Activated B cell treated with CpG ODN at 0.5 μM for 24 hours (primary cell): ENCODE measurements at regions of chr3 and their contacts with region 1.

Region 1: DNA sequence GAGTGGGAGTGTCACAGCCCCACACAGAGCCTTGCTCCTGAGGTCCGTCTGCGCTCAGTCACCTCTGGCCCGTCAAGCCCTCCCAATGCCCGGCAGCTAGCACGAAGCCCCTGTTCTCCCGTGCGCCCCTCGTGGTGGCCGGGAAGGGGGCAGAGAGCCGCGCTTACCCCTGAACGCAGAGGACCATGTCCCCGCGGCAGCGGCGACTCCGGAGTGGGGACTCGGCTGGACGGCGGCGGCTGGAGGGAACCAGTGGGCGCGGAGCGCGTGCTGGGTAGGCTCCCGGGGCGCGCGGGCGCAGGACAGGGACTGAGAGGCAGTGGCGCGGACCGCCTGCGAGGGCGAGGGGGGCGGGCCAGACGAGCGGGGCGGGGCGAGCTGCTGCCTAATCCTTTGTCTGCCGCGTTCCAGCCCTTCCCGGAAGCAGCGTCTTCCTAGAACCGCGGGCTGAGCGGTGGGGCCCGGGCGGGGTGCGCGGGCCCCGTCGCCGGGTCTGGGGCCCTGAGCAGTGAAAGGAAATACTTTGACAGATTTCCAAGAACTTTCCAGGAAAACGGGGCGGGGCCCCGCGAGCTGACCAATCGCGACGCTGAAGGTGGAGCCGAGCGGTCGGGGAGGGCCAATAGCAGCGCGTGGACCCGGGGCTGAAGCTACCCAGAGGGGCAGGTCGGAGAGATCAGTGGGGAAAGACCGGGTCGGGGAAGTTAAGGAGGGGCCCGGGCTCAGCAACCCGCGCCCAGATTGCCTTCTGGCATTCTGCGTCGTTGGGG is at the start of gene CISH:
- DNase-seq: peak; percentile 92
- ATAC-seq: peak; percentile 77
- H3K4me3 Mint-ChIP-seq: peak within 1 kb of the TSS; percentile 87
- H3K27ac Mint-ChIP-seq: peak within 1 kb of the TSS; percentile 77
- H3K4me1 Mint-ChIP-seq: peaks cover 38% of the 10 kb centered on the region
- H3K27me3 Mint-ChIP-seq: no peaks in the 10 kb centered on the region
- CTCF ChIP-seq: no peak
- total RNA-seq, gene CISH: 2.9 and 3.2 TPM in 2 replicates

Region 2: GRCh38 chr3:48788544-48789162 is 1823.0 kb before region 1 on chr3:
- CTCF ChIA-PET with region 1: no interaction called
- POLR2A ChIA-PET with region 1: no interaction called
- intact Hi-C with region 1: no loop called
- DNase-seq: no peak
- ATAC-seq: no peak
- H3K4me3 Mint-ChIP-seq: no peak overlapping the region
- H3K27ac Mint-ChIP-seq: no peak overlapping the region
- H3K4me1 Mint-ChIP-seq: no peaks in the 10 kb centered on the region
- H3K27me3 Mint-ChIP-seq: no peaks in the 10 kb centered on the region
- CTCF ChIP-seq: no peak

Region 3: GRCh38 chr3:48918388-48919214 is 1693.0 kb before region 1 on chr3 and contains the start of gene ARIH2:
- CTCF ChIA-PET with region 1: no interaction called
- POLR2A ChIA-PET with region 1: no interaction called
- intact Hi-C with region 1: no loop called
- DNase-seq: peak; percentile 91
- ATAC-seq: peak; percentile 85
- H3K4me3 Mint-ChIP-seq: peak within 1 kb of the TSS; percentile 99
- H3K27ac Mint-ChIP-seq: peak within 1 kb of the TSS; percentile 98
- H3K4me1 Mint-ChIP-seq: peaks cover 32% of the 10 kb centered on the region
- H3K27me3 Mint-ChIP-seq: no peaks in the 10 kb centered on the region
- CTCF ChIP-seq: no peak
- total RNA-seq, gene ARIH2: 96.6 and 112 TPM in 2 replicates

Region 4: GRCh38 chr3:50365080-50365841 is 246.4 kb before region 1 on chr3:
- CTCF ChIA-PET with region 1: no interaction called
- POLR2A ChIA-PET with region 1: interaction called, 3 read pairs
- intact Hi-C with region 1: loop called (anchors 1 kb)
- DNase-seq: peak; percentile 85
- ATAC-seq: peak; percentile 97
- H3K4me3 Mint-ChIP-seq: peak overlapping the region; percentile 85
- H3K27ac Mint-ChIP-seq: peak overlapping the region; percentile 83
- H3K4me1 Mint-ChIP-seq: peaks cover 19% of the 10 kb centered on the region
- H3K27me3 Mint-ChIP-seq: peaks cover 2% of the 10 kb centered on the region
- CTCF ChIP-seq: no peak

Region 5: GRCh38 chr3:50587806-50588758 is 23.6 kb before region 1 on chr3:
- CTCF ChIA-PET with region 1: interaction called, 60 read pairs
- POLR2A ChIA-PET with region 1: interaction called, 52 read pairs
- intact Hi-C with region 1: loop called (anchors 1 kb)
- DNase-seq: no peak
- ATAC-seq: peak; percentile 6
- H3K4me3 Mint-ChIP-seq: no peak overlapping the region
- H3K27ac Mint-ChIP-seq: peak overlapping the region; percentile 63
- H3K4me1 Mint-ChIP-seq: peaks cover 34% of the 10 kb centered on the region
- H3K27me3 Mint-ChIP-seq: no peaks in the 10 kb centered on the region
- CTCF ChIP-seq: no peak

Region 6: GRCh38 chr3:50971487-50971924 is 359.9 kb after region 1 on chr3:
- CTCF ChIA-PET with region 1: interaction called, 3 read pairs
- POLR2A ChIA-PET with region 1: no interaction called
- intact Hi-C with region 1: loop called (anchors 5 kb)
- DNase-seq: no peak
- ATAC-seq: peak; percentile 67
- H3K4me3 Mint-ChIP-seq: no peak overlapping the region
- H3K27ac Mint-ChIP-seq: no peak overlapping the region
- H3K4me1 Mint-ChIP-seq: peaks cover 2% of the 10 kb centered on the region
- H3K27me3 Mint-ChIP-seq: no peaks in the 10 kb centered on the region
- CTCF ChIP-seq: peak; percentile 95

Region 7: GRCh38 chr3:51391075-51391567 is 779.5 kb after region 1 on chr3 and contains the start of gene RBM15B:
- CTCF ChIA-PET with region 1: interaction called, 11 read pairs
- POLR2A ChIA-PET with region 1: interaction called, 22 read pairs
- intact Hi-C with region 1: loop called (anchors 1 kb)
- DNase-seq: peak; percentile 97
- ATAC-seq: peak; percentile 94
- H3K4me3 Mint-ChIP-seq: peak within 1 kb of the TSS; percentile 82
- H3K27ac Mint-ChIP-seq: peak within 1 kb of the TSS; percentile 73
- H3K4me1 Mint-ChIP-seq: peaks cover 60% of the 10 kb centered on the region
- H3K27me3 Mint-ChIP-seq: no peaks in the 10 kb centered on the region
- CTCF ChIP-seq: no peak
- total RNA-seq, gene RBM15B: 28.0 and 28.9 TPM in 2 replicates

Region 8: DNA sequence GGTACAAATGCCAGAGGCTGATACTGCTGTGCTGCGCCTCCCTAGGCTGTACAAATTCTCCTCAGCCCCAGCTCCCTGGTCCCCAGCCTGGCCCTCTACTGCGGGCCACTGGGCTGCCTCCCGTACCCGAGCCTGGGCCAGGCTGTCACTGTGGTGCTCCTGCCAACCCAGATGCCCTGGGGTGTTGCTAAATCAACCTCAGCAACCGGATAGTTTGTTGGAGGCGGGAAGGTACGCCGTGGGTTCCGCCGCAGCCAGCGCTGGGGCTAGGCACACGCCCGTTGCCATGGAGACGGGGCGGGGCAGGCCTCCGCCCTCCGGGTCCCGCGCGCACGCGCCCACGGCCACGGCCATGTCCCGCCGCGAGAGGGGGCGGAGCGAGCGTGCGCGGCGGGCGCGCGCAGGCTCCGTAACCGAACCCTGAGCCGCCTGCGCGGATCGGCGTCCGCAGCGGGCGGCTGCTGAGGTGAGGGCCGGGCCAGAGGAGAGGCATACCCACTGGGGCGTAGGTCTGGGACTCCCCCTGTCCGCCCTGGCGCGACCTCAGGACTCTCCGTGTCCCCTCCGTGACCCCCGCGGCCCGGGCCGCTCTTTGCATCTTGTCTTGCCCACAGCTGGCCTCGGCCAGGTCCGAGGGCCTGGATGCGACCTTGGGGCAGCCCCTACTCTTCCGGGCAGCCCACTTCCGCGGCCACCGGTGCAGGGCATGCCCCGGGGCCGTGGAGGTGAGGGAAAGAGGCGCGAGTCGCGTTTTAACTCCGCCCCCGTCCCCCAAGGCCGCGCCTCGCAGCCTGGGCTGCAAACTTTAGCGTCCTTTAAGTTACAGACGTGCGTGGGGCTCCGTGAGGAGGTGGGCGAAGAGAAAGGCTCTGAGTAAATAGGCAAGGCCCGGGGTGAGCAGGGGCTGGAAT is 1059.4 kb after region 1 on chr3 and contains the start of gene TEX264:
- CTCF ChIA-PET with region 1: no interaction called
- POLR2A ChIA-PET with region 1: no interaction called
- intact Hi-C with region 1: loop called (anchors 1 kb)
- DNase-seq: peak; percentile 95
- ATAC-seq: peak; percentile 85
- H3K4me3 Mint-ChIP-seq: peak within 1 kb of the TSS; percentile 89
- H3K27ac Mint-ChIP-seq: peak within 1 kb of the TSS; percentile 89
- H3K4me1 Mint-ChIP-seq: peaks cover 55% of the 10 kb centered on the region
- H3K27me3 Mint-ChIP-seq: no peaks in the 10 kb centered on the region
- CTCF ChIP-seq: no peak
- total RNA-seq, gene TEX264: 24.1 and 24.4 TPM in 2 replicates